ENCODE measurements at regions of chr5 and their contacts with region 1.

Region 1: GRCh38 chr5:139633295-139634027 is 14.7 kb upstream of the CXXC5 start:
- DNase-seq: peak; percentile 67 to 83 (median 79)
- ATAC-seq: peak; percentile 15 to 29
- H3K4me3 ChIP-seq: no peak overlapping the region
- H3K27ac ChIP-seq: no peak overlapping the region
- H3K4me1 ChIP-seq: peaks cover 14% of the 10 kb centered on the region
- H3K27me3 ChIP-seq: no peaks in the 10 kb centered on the region

Region 2: GRCh38 chr5:139368613-139369012 is 264.8 kb before region 1 on chr5:
- intact Hi-C with region 1: no loop called
- DNase-seq: no peak
- ATAC-seq: no peak
- H3K4me3 ChIP-seq: no peak overlapping the region
- H3K27ac ChIP-seq: no peak overlapping the region
- H3K4me1 ChIP-seq: no peaks in the 10 kb centered on the region
- H3K27me3 ChIP-seq: no peaks in the 10 kb centered on the region

Region 3: DNA sequence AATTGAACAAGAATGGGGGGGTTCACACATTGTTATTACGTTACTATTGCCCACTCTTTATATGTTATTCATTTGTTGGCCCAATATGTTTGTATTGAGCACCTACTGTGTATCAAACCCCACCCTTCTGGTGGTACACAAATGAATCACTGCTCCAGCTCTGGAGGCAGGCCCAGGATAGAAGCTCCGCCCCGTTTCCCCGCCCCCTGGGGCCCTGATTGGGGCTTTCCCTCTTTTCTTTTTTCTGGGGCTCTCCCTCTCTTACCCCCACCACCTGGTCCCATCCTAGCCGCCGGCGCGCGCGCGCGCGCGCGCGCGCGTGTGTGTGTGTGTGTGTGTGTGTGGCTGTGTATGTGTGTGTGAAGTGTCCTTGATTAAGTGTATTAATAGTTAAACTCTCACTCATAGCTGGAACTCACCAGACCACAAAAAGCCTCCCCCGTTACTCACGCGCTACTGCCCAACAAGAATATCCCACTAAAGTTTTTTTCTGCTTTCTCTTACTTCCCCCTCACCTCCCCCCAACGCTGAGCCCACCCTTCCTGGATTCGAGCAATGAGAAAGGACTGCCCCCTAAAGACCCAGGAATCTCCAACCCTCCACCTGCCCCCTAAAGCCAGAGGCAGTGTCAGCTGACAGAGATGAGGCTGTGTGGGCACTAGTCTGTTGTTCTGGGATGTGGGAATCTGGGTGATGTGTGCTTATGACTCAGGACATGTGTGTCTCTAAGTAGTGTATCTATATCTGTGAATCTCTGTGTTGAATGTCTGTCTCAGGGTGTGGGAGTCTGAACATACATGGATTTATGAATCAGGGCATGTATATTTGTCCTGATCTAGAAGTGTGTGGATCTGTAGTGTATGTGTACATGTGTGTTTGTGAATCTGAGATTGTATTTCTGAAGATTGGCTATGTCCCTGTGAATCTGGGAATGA is 18.7 kb after region 1 on chr5:
- intact Hi-C with region 1: loop called in 1 of 4 experiments (anchors 2 kb)
- DNase-seq: peak; percentile 76 to 92 (median 91)
- ATAC-seq: peak; percentile 10 to 30
- H3K4me3 ChIP-seq: no peak overlapping the region
- H3K27ac ChIP-seq: peak overlapping the region; percentile 94
- H3K4me1 ChIP-seq: peaks cover 34% of the 10 kb centered on the region
- H3K27me3 ChIP-seq: no peaks in the 10 kb centered on the region

Region 4: DNA sequence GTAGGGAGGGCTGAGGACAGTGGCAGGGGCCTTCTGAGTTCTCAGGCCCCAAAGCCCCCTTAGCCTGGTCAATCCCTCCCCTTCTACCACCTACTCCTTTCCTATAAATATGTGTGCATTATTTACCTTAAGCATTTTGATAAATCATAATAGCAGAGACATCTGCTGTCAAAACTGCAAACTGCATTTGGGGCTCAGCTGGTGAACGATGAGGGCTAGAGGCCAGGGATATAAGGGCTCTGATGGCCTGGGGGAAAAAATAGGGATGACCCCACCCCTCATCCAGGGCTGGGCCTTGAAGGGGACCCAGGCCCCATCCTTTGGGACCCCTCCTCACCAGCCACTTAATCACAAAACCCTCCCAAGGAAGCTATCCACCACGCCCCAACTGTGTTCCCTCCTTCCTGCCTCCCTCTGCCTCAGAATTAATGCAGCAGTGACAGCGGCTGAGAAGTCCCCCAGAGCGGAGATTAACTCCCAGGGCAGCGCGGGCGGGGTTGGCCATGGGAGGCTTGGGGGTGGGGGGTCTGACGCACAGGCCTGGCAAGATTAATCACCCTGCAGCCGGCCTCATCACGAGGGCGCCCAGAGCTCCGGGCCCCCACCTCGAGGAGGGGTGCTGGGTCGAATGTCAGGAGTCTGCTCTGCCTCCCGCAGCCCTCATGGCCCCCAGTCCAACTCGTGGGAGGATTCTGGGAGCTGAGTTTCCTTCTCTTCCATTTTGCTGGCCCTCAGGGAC is 56.8 kb after region 1 on chr5:
- intact Hi-C with region 1: loop called (anchors 5 kb)
- DNase-seq: peak; percentile 68 to 82 (median 69)
- ATAC-seq: peak; percentile 6 to 46
- H3K4me3 ChIP-seq: no peak overlapping the region
- H3K27ac ChIP-seq: peak overlapping the region; percentile 23
- H3K4me1 ChIP-seq: peaks cover 14% of the 10 kb centered on the region
- H3K27me3 ChIP-seq: no peaks in the 10 kb centered on the region